GM12878 (cell line): ENCODE measurements at regions of chr10 and their contacts with region 1.

Region 1: DNA sequence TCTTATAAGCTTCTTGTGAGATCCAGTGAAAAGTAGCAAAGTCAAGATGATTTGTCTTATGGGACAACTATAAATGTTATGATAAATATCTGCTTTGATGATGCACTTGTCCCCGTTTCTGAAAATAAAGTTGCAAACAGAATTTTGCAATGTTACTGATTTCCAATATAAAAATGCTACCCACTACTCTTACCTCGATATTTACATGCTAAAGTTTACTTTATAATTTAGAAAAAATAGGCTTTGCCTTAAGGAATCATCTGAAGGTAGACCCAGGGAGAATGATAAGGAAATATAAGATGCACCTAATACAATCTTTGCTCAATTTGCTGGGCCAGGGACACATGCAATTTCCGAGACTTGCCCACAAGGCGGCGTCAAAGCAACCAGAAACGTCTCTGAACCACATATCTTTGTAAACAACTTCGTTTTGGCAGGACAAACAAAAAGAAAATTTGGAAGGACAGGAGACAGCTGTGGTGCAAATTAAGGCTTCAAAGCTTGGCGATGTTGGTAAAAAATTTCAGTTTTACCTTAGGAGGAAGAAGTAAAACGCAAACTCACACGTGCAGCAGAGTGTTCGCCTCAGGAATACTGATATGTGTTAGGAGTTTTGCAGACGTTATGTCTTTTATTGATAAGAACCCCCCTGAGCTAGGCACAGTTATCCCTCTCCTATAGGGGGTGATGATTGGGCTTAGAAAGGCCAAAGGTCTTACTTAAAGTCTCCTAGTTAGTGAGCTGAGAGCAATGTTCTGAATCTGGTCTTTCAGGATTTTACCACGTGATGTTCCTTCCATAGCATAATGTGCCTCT is 134.4 kb downstream of the PRKCQ start:
- DNase-seq: no peak
- ATAC-seq: peak; percentile 82
- H3K4me3 ChIP-seq: no peak overlapping the region
- H3K27ac ChIP-seq: no peak overlapping the region
- H3K4me1 ChIP-seq: no peaks in the 10 kb centered on the region
- H3K27me3 ChIP-seq: no peaks in the 10 kb centered on the region; a peak in 1 of 4 replicates
- CTCF ChIP-seq: peak; percentile 61 to 82 (median 67)
- EP300 ChIP-seq: no peak
- POLR2A ChIP-seq: no peak
- RAD21 ChIP-seq: peak; percentile 69

Region 2: GRCh38 chr10:6464862-6465430 is 19.2 kb after region 1 on chr10:
- CTCF ChIA-PET with region 1: interaction called, 17 read pairs
- POLR2A ChIA-PET with region 1: interaction called, 3 read pairs
- RAD21 ChIA-PET with region 1: interaction called, 9 read pairs
- SMC1A ChIA-PET with region 1: interaction called, 32 read pairs
- in situ Hi-C with region 1: no loop called
- intact Hi-C with region 1: no loop called
- DNase-seq: no peak
- ATAC-seq: peak; percentile 54
- H3K4me3 ChIP-seq: no peak overlapping the region
- H3K27ac ChIP-seq: no peak overlapping the region
- H3K4me1 ChIP-seq: no peaks in the 10 kb centered on the region
- H3K27me3 ChIP-seq: no peaks in the 10 kb centered on the region
- CTCF ChIP-seq: no peak
- EP300 ChIP-seq: no peak
- POLR2A ChIP-seq: no peak
- RAD21 ChIP-seq: no peak

Region 3: GRCh38 chr10:6498771-6499170 is 53.1 kb after region 1 on chr10:
- CTCF ChIA-PET with region 1: interaction called, 4 read pairs
- POLR2A ChIA-PET with region 1: no interaction called
- RAD21 ChIA-PET with region 1: no interaction called
- SMC1A ChIA-PET with region 1: interaction called, 17 read pairs
- in situ Hi-C with region 1: no loop called
- intact Hi-C with region 1: no loop called
- DNase-seq: no peak
- ATAC-seq: no peak
- H3K4me3 ChIP-seq: no peak overlapping the region
- H3K27ac ChIP-seq: no peak overlapping the region
- H3K4me1 ChIP-seq: no peaks in the 10 kb centered on the region
- H3K27me3 ChIP-seq: peaks cover 0 to 2% of the 10 kb centered on the region in 2 experiments; a peak in 2 of 4 replicates
- CTCF ChIP-seq: no peak
- EP300 ChIP-seq: no peak
- POLR2A ChIP-seq: no peak
- RAD21 ChIP-seq: no peak

Region 4: GRCh38 chr10:6617309-6618076 is 171.8 kb after region 1 on chr10:
- CTCF ChIA-PET with region 1: no interaction called
- POLR2A ChIA-PET with region 1: no interaction called
- RAD21 ChIA-PET with region 1: no interaction called
- SMC1A ChIA-PET with region 1: no interaction called
- in situ Hi-C with region 1: no loop called
- intact Hi-C with region 1: no loop called
- DNase-seq: no peak
- ATAC-seq: no peak
- H3K4me3 ChIP-seq: no peak overlapping the region
- H3K27ac ChIP-seq: no peak overlapping the region
- H3K4me1 ChIP-seq: no peaks in the 10 kb centered on the region
- H3K27me3 ChIP-seq: no peaks in the 10 kb centered on the region
- CTCF ChIP-seq: no peak
- EP300 ChIP-seq: no peak
- POLR2A ChIP-seq: no peak
- RAD21 ChIP-seq: no peak

Region 5: GRCh38 chr10:6871126-6871525 is 425.4 kb after region 1 on chr10:
- CTCF ChIA-PET with region 1: no interaction called
- POLR2A ChIA-PET with region 1: no interaction called
- RAD21 ChIA-PET with region 1: no interaction called
- SMC1A ChIA-PET with region 1: no interaction called
- in situ Hi-C with region 1: loop called (anchors 25 kb)
- intact Hi-C with region 1: no loop called
- DNase-seq: no peak
- ATAC-seq: no peak
- H3K4me3 ChIP-seq: no peak overlapping the region
- H3K27ac ChIP-seq: no peak overlapping the region
- H3K4me1 ChIP-seq: no peaks in the 10 kb centered on the region
- H3K27me3 ChIP-seq: peaks cover 0 to 7% of the 10 kb centered on the region in 2 experiments; a peak in 2 of 4 replicates
- CTCF ChIP-seq: no peak
- EP300 ChIP-seq: no peak
- POLR2A ChIP-seq: no peak
- RAD21 ChIP-seq: no peak